ENCODE measurements at regions of chr12 and their contacts with region 1.

Region 1: DNA sequence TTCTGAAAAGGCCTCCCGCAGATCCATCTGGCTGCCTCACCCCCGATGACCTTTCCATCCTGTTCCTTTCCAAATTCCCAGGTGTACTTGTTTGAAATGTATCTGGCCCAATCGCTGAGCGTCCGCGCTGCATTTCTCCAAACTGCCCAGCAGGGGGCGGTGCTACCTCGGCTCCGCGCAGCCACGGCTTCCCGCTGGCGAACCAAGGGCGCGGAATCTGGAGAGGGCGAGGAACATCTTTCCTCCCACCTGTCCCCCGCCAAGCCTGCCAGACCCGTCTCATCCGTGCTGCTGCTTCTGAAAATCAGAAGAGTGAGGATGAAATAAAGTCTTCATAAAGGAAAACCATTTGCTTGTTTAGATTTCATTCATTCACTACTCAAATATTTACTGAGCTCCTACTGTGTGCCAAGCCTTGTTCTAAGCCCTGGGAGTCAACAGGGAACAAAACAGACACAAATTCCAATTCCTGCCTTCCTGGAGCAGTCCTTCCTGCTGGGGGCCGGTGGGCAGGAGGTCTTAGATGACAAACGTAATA is 16.8 kb upstream of the MYL2 start:
- DNase-seq: peak; percentile 90

Region 2: DNA sequence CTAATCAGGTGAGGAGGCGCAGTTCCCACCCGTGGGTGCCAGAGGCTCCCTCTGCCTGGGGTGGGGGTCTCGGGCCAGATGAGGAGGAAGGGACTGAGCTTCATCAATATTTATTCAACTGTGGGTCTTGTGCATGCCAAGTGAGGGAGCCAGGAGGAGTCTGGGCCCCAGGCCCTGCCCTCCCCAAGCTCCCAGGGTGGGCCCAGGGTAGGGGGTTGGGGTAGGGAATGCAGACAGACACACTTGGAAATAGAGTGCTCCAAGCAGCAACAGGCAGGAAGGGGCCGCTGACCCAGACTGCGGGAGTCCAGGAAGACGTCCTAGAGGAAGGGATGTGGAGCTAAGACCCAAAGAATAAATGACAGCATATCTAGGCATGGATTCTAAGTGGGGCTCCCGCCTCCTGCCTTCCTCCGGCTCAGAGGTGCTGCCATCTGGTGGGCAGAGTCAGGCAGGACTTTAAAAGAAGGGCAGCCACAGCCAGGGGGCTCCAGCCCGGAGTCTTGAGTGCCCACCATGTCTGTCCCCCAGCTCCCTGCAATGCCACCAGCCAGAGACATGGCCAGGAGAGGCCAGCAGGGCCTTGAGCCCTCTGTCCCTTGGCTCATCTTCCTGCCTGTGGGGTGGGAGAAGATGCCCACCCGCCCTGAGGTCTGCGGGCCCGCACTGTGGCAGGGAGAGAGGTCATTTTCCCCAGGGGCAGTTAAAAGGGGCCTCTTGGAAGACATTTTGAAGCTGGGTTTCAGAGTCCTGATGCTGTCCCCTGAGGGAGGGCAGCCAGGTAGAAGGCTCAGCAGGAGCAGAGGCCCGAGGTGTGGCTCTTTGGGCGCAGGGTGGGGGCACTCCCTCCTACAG is 361.6 kb after region 1 on chr12:
- intact Hi-C with region 1: loop called in 1 of 2 experiments (anchors 10 kb)
- DNase-seq: no peak